ENCODE measurements at regions of chrX and their contacts with region 1.

Region 1: DNA sequence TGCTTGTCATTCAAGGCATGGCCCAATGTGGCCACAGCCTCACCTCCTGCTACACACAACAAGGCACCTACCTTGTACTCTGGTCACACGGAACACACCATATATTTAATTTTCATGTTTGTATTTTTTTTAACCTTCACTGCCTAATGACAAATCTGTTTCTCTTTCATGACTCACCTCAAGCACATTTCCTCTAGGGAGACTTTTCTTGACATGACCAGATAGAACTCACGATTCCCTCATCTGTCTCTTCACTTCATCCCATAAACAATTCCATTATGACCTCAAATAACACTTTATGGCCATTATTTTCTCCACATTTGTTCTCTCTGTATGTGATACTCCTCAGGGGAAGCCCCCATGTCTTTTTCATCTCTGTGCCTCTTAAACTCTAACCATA is 11.1 kb downstream of the DRP2 start:
- DNase-seq: peak; percentile 14
- H3K4me3 ChIP-seq: no peak overlapping the region
- H3K27ac ChIP-seq: no peak overlapping the region
- H3K4me1 ChIP-seq: peaks cover 3% of the 10 kb centered on the region
- H3K27me3 ChIP-seq: peaks cover 3% of the 10 kb centered on the region
- CTCF ChIP-seq: no peak

Region 2: DNA sequence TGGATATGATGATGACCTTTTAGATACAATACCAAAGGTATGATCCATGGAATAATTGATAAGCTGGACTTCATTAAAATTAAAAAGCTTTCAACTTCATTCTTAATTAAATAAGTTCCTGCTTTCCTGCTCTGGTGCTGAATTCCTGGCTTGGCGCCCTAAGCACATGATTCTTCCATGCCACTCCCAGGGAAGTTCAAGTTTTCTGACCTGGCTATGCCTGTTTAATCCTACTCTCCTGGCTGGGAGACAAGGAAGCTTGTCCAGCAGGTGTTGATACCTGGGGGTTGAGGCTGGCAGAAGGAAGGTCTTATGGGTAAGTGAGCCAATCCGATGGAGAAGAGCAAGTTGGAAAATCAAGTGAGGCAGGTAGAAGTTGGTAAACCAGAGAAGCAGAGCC is 326.2 kb before region 1 on chrX:
- CTCF ChIA-PET with region 1: no interaction called
- dilution Hi-C with region 1: loop called (anchors 10 kb)
- in situ Hi-C with region 1: no loop called
- intact Hi-C with region 1: no loop called
- DNase-seq: no peak
- H3K4me3 ChIP-seq: no peak overlapping the region
- H3K27ac ChIP-seq: no peak overlapping the region
- H3K4me1 ChIP-seq: no peaks in the 10 kb centered on the region
- H3K27me3 ChIP-seq: no peaks in the 10 kb centered on the region
- CTCF ChIP-seq: no peak

Region 3: DNA sequence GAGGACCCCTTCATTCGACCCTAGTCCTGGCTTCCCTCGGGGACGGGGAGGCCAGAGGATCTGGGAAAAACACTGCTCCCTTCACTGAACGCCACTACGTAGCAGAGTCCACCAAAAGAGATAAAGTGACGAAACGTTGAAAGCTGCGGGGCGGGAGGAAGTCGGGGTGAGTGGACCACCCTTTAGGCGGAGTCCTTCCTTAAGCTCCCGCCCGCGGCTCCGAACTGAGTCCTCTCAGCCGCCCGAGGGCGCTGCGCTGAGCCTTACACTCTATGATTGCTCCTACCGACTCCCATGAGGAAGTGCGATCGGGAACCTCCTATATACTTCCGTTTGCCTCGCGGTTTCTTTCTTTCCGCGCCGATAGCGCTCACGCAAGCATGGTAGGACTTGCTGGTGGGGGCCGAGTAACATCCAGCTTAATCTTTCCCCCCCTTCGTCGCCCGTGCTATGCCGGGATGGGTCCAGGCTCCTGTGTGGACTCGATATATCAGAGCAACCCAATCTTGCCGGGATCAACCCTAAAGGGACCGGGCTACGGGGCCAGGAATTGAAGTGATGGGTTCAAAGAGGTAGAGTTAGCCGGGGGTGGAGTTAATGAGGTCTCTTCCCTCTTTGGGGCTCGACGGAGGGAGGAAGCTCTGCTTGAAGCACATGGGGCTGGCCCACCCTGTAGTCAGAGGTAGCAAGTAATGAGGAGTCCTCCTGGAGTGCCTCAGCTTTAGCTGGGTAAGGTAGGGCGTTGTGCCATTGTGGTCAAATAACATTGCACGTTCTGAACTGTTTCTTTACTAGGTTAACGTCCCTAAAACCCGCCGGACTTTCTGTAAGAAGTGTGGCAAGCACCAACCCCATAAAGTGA is 160.3 kb after region 1 on chrX and contains the start of gene RPL36A:
- CTCF ChIA-PET with region 1: no interaction called
- dilution Hi-C with region 1: no loop called
- in situ Hi-C with region 1: no loop called
- intact Hi-C with region 1: no loop called
- DNase-seq: peak; percentile 79
- H3K4me3 ChIP-seq: peak within 1 kb of the TSS; percentile 55 to 76 (median 74)
- H3K27ac ChIP-seq: peak within 1 kb of the TSS; percentile 73
- H3K4me1 ChIP-seq: peaks cover 15% of the 10 kb centered on the region
- H3K27me3 ChIP-seq: peaks cover 2% of the 10 kb centered on the region
- CTCF ChIP-seq: peak; percentile 56 to 69
- total RNA-seq, gene RPL36A: 288 to 293 TPM